Ovary (tissue), 10 donors: ENCODE measurements at regions of chr10 and their contacts with region 1.

Region 1: DNA sequence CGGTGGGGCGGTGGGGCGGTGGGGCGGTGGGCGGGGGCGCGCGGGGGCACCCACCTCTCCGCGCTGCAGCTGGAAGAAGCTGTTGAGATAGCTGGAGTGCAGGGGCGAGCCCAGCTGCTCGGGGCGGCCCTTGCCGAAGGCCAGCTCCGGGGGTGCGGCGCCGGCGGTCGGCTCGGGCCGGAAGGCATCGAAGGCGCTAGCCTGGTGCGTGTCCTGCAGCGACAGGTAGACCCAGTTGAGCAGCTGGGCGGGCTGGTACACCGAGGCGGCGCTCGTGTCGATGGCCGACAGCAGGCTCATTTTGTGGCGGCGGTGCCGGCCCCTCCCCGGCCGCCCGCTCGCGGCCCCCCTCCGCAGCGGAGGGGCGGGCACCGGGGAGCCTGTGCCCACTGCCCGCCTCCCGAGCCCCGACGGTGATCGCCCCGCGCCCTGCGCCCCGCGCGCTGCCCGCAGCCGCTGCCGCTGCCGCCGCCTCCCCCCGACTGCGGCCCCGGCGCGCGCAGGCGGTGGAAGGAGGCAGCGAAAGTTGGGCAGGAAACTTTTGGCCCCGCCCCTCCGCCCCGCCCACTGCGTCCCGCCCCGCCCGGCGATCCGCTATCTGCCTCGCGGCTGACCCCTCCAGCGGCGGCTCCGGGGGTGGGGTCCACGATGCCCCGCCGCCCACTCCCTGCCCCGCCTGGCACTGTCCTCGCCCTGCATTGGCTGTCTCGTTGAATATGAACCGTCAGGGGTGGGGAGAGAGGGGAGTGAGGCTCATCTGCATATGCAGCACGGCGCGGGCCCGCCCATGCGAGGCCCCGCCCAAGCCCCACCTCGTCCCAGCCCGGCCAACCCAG is at the start of gene ZCCHC24:
- DNase-seq: peak; percentile 98
- H3K4me3 ChIP-seq: peak within 1 kb of the TSS; percentile 99
- H3K27ac ChIP-seq: peak within 1 kb of the TSS; percentile 54 to 83
- H3K4me1 ChIP-seq: peaks cover 11% of the 10 kb centered on the region
- H3K27me3 ChIP-seq: no peaks in the 10 kb centered on the region
- CTCF ChIP-seq: no peak
- EP300 ChIP-seq: no peak
- POLR2A ChIP-seq: peak; percentile 81
- total RNA-seq, gene ZCCHC24: 21.6 to 92.1 (median 72.0) TPM

Region 2: GRCh38 chr10:79347226-79347893 is 98.0 kb before region 1 on chr10 and contains the start of gene PPIF:
- intact Hi-C with region 1: no loop called
- DNase-seq: peak; percentile 94 to 97 (median 95)
- H3K4me3 ChIP-seq: peak within 1 kb of the TSS; percentile 63
- H3K27ac ChIP-seq: peak within 1 kb of the TSS; percentile 63 to 87
- H3K4me1 ChIP-seq: peaks cover 14% of the 10 kb centered on the region
- H3K27me3 ChIP-seq: no peaks in the 10 kb centered on the region
- CTCF ChIP-seq: peak; percentile 96 to 98 (median 96)
- EP300 ChIP-seq: no peak
- POLR2A ChIP-seq: peak; percentile 90
- total RNA-seq, gene PPIF: 15.5 to 39.2 (median 32.3) TPM

Region 3: GRCh38 chr10:79381804-79382221 is 63.5 kb before region 1 on chr10:
- intact Hi-C with region 1: loop called in 1 of 4 experiments (anchors 5 kb)
- DNase-seq: peak; percentile 54 to 80 (median 61)
- H3K4me3 ChIP-seq: no peak overlapping the region
- H3K27ac ChIP-seq: peak overlapping the region in 1 of 2 donors; percentile 53
- H3K4me1 ChIP-seq: peaks cover 30% of the 10 kb centered on the region
- H3K27me3 ChIP-seq: no peaks in the 10 kb centered on the region
- CTCF ChIP-seq: no peak
- EP300 ChIP-seq: no peak
- POLR2A ChIP-seq: no peak

Region 4: DNA sequence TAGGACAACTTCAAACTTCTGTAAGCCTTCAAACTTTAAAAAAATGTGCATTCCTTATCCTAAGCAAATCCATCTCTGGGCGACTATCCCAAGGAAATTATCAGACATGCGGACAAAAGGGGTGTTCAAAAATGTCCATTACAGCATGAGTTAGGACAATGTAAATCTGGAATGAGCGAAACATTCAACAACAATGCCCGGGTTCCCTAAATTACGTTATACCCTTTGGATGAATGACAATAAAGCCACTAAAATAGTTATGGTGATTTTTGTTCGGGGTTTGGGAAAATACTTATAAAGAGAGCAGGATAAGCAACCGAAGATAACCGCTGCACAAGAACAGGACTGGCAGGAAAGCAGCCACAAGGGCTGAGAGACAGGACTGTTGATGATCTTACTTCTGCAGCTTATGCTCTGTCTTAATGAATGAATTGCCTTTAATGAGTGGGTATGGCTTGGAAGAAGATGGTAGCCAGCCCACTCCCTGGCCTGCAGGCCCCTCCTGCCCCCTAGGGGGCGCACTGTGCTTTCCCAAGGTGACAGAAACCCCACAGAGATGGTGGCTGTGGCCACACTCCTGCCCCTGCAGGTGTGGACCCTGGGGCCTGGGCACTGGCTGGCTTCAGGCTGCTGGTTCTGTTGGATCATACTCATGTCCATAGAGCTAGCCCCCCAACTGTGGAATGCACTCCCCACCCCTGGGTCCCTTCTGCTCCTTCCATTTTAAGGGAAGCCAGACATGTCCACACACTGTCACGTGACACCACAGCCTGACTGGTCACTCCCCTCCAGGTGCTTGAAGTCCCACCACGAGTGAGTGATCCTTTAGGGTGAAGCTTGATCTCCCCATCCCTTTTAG is 45.0 kb before region 1 on chr10:
- intact Hi-C with region 1: loop called in 2 of 4 experiments (anchors 2 to 5 kb)
- DNase-seq: peak in 4 of 5 donors; percentile 67 to 74 (median 70)
- H3K4me3 ChIP-seq: no peak overlapping the region
- H3K27ac ChIP-seq: peak overlapping the region in 1 of 2 donors; percentile 80
- H3K4me1 ChIP-seq: peaks cover 64% of the 10 kb centered on the region
- H3K27me3 ChIP-seq: no peaks in the 10 kb centered on the region
- CTCF ChIP-seq: peak in 2 of 3 donors; percentile 29 to 39
- EP300 ChIP-seq: no peak
- POLR2A ChIP-seq: no peak

Region 5: GRCh38 chr10:79407811-79408795 is 37.3 kb before region 1 on chr10:
- intact Hi-C with region 1: loop called in 1 of 4 experiments (anchors 5 kb)
- DNase-seq: peak; percentile 78 to 82 (median 81)
- H3K4me3 ChIP-seq: no peak overlapping the region
- H3K27ac ChIP-seq: peak overlapping the region in 1 of 2 donors; percentile 80
- H3K4me1 ChIP-seq: peaks cover 57% of the 10 kb centered on the region
- H3K27me3 ChIP-seq: no peaks in the 10 kb centered on the region
- CTCF ChIP-seq: no peak
- EP300 ChIP-seq: no peak
- POLR2A ChIP-seq: no peak

Region 6: DNA sequence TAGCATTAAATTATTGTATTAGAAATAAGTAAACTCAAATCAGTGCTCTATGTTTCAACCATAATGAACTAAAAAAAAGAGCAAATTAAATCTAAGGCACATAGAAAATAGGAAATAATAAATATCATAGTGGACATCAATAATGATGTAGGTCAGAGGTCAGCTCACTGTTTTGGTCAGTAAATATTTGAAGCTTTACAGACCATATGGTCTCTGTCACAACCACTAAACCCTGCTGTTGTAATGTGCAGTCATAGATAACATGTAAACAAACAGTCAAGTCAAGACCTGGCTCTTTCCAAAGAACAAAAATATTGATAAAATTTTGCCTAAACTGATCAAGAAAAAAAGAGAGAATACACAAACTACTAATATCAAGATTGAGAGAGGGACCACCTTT is 1707.3 kb after region 1 on chr10:
- intact Hi-C with region 1: no loop called
- DNase-seq: no peak
- H3K4me3 ChIP-seq: no peak overlapping the region
- H3K27ac ChIP-seq: no peak overlapping the region
- H3K4me1 ChIP-seq: no peaks in the 10 kb centered on the region
- H3K27me3 ChIP-seq: no peaks in the 10 kb centered on the region
- CTCF ChIP-seq: no peak
- EP300 ChIP-seq: no peak
- POLR2A ChIP-seq: no peak